ENCODE measurements at regions of chr17 and their contacts with region 1.

Region 1: GRCh38 chr17:12256380-12256995 is 235.8 kb downstream of the MAP2K4 start:
- DNase-seq: peak; percentile 64
- H3K4me3 ChIP-seq: no peak overlapping the region
- H3K27ac ChIP-seq: no peak overlapping the region
- H3K4me1 ChIP-seq: no peaks in the 10 kb centered on the region
- H3K27me3 ChIP-seq: no peaks in the 10 kb centered on the region; the same call in 1 of the 2 replicates

Region 2: GRCh38 chr17:11682646-11683045 is 573.8 kb before region 1 on chr17:
- in situ Hi-C with region 1: no loop called
- DNase-seq: no peak
- H3K4me3 ChIP-seq: no peak overlapping the region
- H3K27ac ChIP-seq: no peak overlapping the region
- H3K4me1 ChIP-seq: no peaks in the 10 kb centered on the region
- H3K27me3 ChIP-seq: no peaks in the 10 kb centered on the region

Region 3: GRCh38 chr17:12667299-12667958 is 410.9 kb after region 1 on chr17:
- in situ Hi-C with region 1: loop called (anchors 10 kb)
- DNase-seq: peak; percentile 43
- H3K4me3 ChIP-seq: no peak overlapping the region
- H3K27ac ChIP-seq: no peak overlapping the region
- H3K4me1 ChIP-seq: 0 out of 2 replicates have a peak, but pooled peaks cover 10% of the 10 kb centered on the region
- H3K27me3 ChIP-seq: peaks cover 46% of the 10 kb centered on the region

Region 4: GRCh38 chr17:12983991-12984884 is 727.8 kb after region 1 on chr17:
- in situ Hi-C with region 1: loop called (anchors 25 kb)
- DNase-seq: peak; percentile 98
- H3K4me3 ChIP-seq: peak overlapping the region; percentile 58
- H3K27ac ChIP-seq: peak overlapping the region; percentile 80
- H3K4me1 ChIP-seq: peaks cover 24% of the 10 kb centered on the region
- H3K27me3 ChIP-seq: no peaks in the 10 kb centered on the region

Measured in GM23248 (cell line).